SK-N-SH (cell line): ENCODE measurements at regions of chr17 and their contacts with region 1.

Region 1: DNA sequence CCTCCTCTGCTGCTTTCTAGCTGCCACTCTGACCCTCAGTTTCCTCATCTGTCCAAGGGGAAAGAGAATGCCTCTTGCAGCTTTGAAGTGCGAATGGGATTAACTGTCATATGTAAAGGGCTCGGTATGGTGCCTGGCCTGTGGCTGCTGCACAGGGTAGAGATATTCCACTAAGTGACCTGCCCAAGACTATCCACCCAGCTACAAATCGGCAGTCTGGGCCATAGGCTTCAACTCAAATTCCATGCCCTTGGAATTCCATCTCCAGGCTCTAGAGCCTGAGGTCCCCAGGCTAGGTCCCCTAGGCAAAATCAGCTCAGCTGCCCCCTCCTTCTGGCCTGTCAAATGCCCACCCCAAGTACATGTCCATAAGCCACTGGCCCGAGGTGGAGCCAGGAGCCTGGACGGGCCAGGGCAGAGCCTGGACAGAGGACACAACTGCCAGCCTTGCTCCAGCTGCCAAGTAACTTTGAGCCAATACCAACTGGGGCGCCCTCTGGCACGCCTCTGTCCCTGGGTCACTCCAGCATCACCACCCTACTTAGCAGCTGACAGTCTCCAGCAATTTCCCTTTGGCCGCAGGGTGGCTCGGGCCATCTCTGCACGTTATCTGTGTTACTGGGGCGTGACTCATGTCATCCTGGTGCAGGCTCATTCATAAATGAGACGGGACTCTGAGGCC is 57.2 kb downstream of the SDK2 start:
- DNase-seq: peak; percentile 90
- H3K4me3 ChIP-seq: no peak overlapping the region
- H3K27ac ChIP-seq: no peak overlapping the region
- H3K4me1 ChIP-seq: peaks cover 0 to 30% of the 10 kb centered on the region in 2 experiments; a peak in 2 of 4 replicates
- H3K27me3 ChIP-seq: no peaks in the 10 kb centered on the region
- CTCF ChIP-seq: no peak
- EP300 ChIP-seq: peak in 1 of 2 experiments; percentile 90; a peak in 2 of 4 replicates
- RAD21 ChIP-seq: peak; percentile 49; the same call in 1 of the 2 replicates

Region 2: GRCh38 chr17:73513426-73513825 is 73.6 kb before region 1 on chr17:
- CTCF ChIA-PET with region 1: interaction called, 11 read pairs
- POLR2A ChIA-PET with region 1: no interaction called
- DNase-seq: no peak
- H3K4me3 ChIP-seq: no peak overlapping the region
- H3K27ac ChIP-seq: no peak overlapping the region
- H3K4me1 ChIP-seq: peaks cover 0 to 15% of the 10 kb centered on the region in 2 experiments; a peak in 2 of 4 replicates
- H3K27me3 ChIP-seq: no peaks in the 10 kb centered on the region
- CTCF ChIP-seq: no peak
- EP300 ChIP-seq: no peak
- RAD21 ChIP-seq: no peak

Region 3: GRCh38 chr17:73566905-73567782 is 19.9 kb before region 1 on chr17:
- CTCF ChIA-PET with region 1: interaction called, 10 read pairs
- POLR2A ChIA-PET with region 1: no interaction called
- DNase-seq: no peak
- H3K4me3 ChIP-seq: no peak overlapping the region
- H3K27ac ChIP-seq: no peak overlapping the region
- H3K4me1 ChIP-seq: no peaks in the 10 kb centered on the region
- H3K27me3 ChIP-seq: no peaks in the 10 kb centered on the region
- CTCF ChIP-seq: no peak
- EP300 ChIP-seq: no peak
- RAD21 ChIP-seq: no peak

Region 4: GRCh38 chr17:73575470-73576221 is 11.4 kb before region 1 on chr17:
- CTCF ChIA-PET with region 1: interaction called, 25 read pairs
- POLR2A ChIA-PET with region 1: no interaction called
- DNase-seq: peak; percentile 71
- H3K4me3 ChIP-seq: no peak overlapping the region
- H3K27ac ChIP-seq: no peak overlapping the region
- H3K4me1 ChIP-seq: peaks cover 0 to 11% of the 10 kb centered on the region in 2 experiments; a peak in 1 of 4 replicates
- H3K27me3 ChIP-seq: no peaks in the 10 kb centered on the region
- CTCF ChIP-seq: no peak
- EP300 ChIP-seq: peak in 1 of 2 experiments; percentile 55; a peak in 1 of 4 replicates
- RAD21 ChIP-seq: no peak

Region 5: GRCh38 chr17:73731733-73732132 is 144.7 kb after region 1 on chr17:
- CTCF ChIA-PET with region 1: no interaction called
- POLR2A ChIA-PET with region 1: no interaction called
- DNase-seq: no peak
- H3K4me3 ChIP-seq: no peak overlapping the region
- H3K27ac ChIP-seq: no peak overlapping the region
- H3K4me1 ChIP-seq: no peaks in the 10 kb centered on the region; a peak in 1 of 4 replicates
- H3K27me3 ChIP-seq: no peaks in the 10 kb centered on the region
- CTCF ChIP-seq: no peak
- EP300 ChIP-seq: no peak
- RAD21 ChIP-seq: no peak

Region 6: GRCh38 chr17:73777127-73777441 is 190.0 kb after region 1 on chr17:
- CTCF ChIA-PET with region 1: no interaction called
- POLR2A ChIA-PET with region 1: no interaction called
- DNase-seq: no peak
- H3K4me3 ChIP-seq: no peak overlapping the region
- H3K27ac ChIP-seq: no peak overlapping the region
- H3K4me1 ChIP-seq: peaks cover 0 to 8% of the 10 kb centered on the region in 2 experiments; a peak in 1 of 4 replicates
- H3K27me3 ChIP-seq: no peaks in the 10 kb centered on the region
- CTCF ChIP-seq: no peak
- EP300 ChIP-seq: no peak
- RAD21 ChIP-seq: no peak

Region 7: DNA sequence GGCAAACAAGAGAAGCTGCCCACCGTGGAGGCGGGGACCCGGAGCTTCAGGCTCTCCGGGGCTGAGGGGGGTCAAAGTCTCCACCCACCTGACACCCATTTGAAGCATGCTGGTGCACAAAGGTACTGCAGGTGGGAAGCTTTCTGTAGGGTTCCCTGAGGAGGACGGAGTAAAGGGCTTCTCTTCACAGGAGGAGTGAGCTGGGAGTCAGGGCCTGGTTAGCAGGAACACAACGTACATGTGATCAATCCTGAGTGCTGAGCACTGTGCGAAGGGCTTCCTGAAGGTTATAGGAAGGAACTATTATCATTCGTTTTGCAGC is 363.5 kb after region 1 on chr17:
- CTCF ChIA-PET with region 1: no interaction called
- POLR2A ChIA-PET with region 1: no interaction called
- DNase-seq: peak; percentile 50
- H3K4me3 ChIP-seq: no peak overlapping the region
- H3K27ac ChIP-seq: no peak overlapping the region
- H3K4me1 ChIP-seq: no peaks in the 10 kb centered on the region; a peak in 1 of 4 replicates
- H3K27me3 ChIP-seq: no peaks in the 10 kb centered on the region
- CTCF ChIP-seq: no peak
- EP300 ChIP-seq: no peak
- RAD21 ChIP-seq: no peak

Region 8: GRCh38 chr17:74118504-74118903 is 531.4 kb after region 1 on chr17:
- CTCF ChIA-PET with region 1: no interaction called
- POLR2A ChIA-PET with region 1: no interaction called
- DNase-seq: peak; percentile 71
- H3K4me3 ChIP-seq: no peak overlapping the region
- H3K27ac ChIP-seq: no peak overlapping the region
- H3K4me1 ChIP-seq: peaks cover 0 to 17% of the 10 kb centered on the region in 2 experiments; a peak in 1 of 4 replicates
- H3K27me3 ChIP-seq: no peaks in the 10 kb centered on the region
- CTCF ChIP-seq: no peak
- EP300 ChIP-seq: no peak
- RAD21 ChIP-seq: 0 out of 2 replicates have a peak, but pooled peaks have one; percentile 18